ENCODE measurements at regions of chr5 and their contacts with region 1.

Region 1: GRCh38 chr5:160105686-160106360 is 13.4 kb downstream of the PWWP2A start:
- DNase-seq: no peak
- H3K4me3 Mint-ChIP-seq: no peak overlapping the region
- H3K27ac Mint-ChIP-seq: peak overlapping the region; percentile 38
- H3K4me1 Mint-ChIP-seq: peaks cover 9% of the 10 kb centered on the region
- H3K27me3 Mint-ChIP-seq: no peaks in the 10 kb centered on the region

Region 2: GRCh38 chr5:160092960-160093707 is 12.7 kb before region 1 on chr5:
- CTCF ChIA-PET with region 1: interaction called, 11 read pairs
- POLR2A ChIA-PET with region 1: no interaction called
- DNase-seq: no peak
- H3K4me3 Mint-ChIP-seq: no peak overlapping the region
- H3K27ac Mint-ChIP-seq: no peak overlapping the region
- H3K4me1 Mint-ChIP-seq: peaks cover 25% of the 10 kb centered on the region
- H3K27me3 Mint-ChIP-seq: no peaks in the 10 kb centered on the region

Region 3: GRCh38 chr5:160467555-160468362 is 361.9 kb after region 1 on chr5:
- CTCF ChIA-PET with region 1: no interaction called
- POLR2A ChIA-PET with region 1: no interaction called
- DNase-seq: peak; percentile 82
- H3K4me3 Mint-ChIP-seq: peak overlapping the region; percentile 97
- H3K27ac Mint-ChIP-seq: peak overlapping the region; percentile 96
- H3K4me1 Mint-ChIP-seq: peaks cover 83% of the 10 kb centered on the region
- H3K27me3 Mint-ChIP-seq: peaks cover 2% of the 10 kb centered on the region